Aorta (tissue), 5 donors: ENCODE measurements at regions of chr14 and their contacts with region 1.

Region 1: GRCh38 chr14:81170104-81170828 is 50.5 kb downstream of the GTF2A1 start:
- DNase-seq: peak; percentile 97
- ATAC-seq: peak; percentile 99
- H3K4me3 ChIP-seq: peak overlapping the region; percentile 24 to 82
- H3K27ac ChIP-seq: peak overlapping the region in 1 of 2 donors; percentile 87
- H3K4me1 ChIP-seq: no peaks in the 10 kb centered on the region
- H3K27me3 ChIP-seq: no peaks in the 10 kb centered on the region

Region 2: DNA sequence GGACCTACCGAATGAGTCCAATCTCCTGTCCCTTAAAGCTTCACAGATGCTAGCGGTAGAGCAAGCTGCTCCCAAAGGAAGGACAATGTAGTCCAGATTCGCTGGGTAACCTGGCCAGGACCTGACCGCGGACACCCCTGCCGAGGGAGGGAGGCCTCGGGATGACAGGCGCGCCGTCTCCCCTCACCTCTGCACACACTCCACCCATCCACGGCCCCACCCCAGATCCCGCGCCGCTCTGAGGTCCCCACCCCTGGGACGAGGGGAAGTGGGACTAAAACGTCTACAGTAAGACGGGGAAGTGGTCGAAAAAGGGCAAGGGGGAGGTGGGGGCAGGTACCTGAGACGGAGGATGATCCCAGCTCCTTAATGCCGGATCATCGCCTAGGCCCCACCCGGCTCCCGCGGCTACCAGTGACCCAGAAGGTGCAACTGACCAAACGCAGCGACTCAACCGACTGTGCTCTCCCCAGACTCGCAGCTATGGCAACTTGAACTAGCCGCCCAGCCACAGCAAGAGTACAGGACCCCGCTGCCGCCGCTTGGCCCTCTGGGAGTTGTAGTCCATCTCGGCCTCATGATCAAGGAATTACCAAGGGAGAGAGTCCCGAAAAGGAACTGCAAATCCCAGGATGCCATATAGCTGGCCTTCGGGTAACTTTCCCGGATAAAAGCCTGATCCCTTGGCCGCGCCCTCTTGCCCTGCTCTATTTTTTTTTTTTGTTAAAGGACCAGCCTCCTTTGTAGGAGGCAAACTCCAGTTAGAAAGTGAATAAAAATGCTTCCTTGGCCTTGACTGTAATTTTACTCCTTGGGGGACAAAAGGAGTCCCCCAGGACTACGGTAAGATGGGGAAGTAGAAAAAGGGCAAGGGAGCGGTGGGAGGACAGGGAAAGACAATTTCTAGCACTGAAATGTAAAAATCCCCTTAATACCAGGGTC is 228.8 kb before region 1 on chr14 and contains the start of gene CEP128:
- intact Hi-C with region 1: loop called in 1 of 2 experiments (anchors 5 kb)
- DNase-seq: peak; percentile 97 to 98
- ATAC-seq: peak; percentile 100
- H3K4me3 ChIP-seq: peak within 1 kb of the TSS; percentile 19 to 70
- H3K27ac ChIP-seq: peak within 1 kb of the TSS in 1 of 2 donors; percentile 7
- H3K4me1 ChIP-seq: no peaks in the 10 kb centered on the region
- H3K27me3 ChIP-seq: peaks cover 0 to 1% of the 10 kb centered on the region in 2 donors
- total RNA-seq, gene CEP128: 6.0 to 8.4 TPM

Region 3: DNA sequence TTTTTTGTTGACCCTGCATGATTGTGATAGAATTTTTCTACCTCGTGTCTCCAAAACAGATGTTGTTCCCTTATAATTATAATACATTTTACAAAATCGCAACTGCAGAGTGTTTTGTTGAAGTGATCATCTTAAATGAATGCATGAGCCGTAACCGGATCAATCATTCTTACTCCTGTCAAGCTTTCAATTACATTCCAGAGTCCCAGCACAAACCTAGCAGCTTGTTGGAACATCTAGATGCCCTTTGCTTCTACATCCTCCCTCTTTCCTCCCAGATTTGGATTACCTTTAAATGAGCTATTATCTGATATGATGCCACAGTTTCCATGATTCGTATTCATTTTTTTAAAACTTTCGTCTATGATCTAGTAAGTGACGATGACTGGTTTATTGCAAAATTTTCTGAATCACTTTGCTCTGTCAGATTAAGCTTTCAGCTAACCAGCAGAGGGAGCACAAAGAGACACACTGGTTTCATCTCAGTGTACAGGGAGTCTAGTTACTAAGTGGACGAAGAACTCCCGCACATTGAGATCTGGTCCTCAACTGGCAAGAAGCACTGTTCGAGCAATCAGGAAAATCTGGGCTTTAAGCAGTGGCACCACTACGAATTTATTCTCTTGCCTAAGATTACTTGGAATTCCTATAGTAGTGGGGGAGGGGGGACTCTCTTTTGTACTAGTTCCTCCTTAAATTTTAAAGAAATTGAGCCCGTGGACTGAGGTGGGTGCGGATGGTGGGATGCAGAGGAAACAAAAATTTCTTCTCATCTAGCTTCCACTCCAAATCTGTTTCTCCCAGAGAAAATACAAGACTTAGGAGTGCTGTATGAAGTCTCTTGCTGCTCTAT is 174.0 kb before region 1 on chr14:
- intact Hi-C with region 1: loop called (anchors 5 kb)
- DNase-seq: no peak
- ATAC-seq: peak; percentile 87
- H3K4me3 ChIP-seq: no peak overlapping the region
- H3K27ac ChIP-seq: no peak overlapping the region
- H3K4me1 ChIP-seq: no peaks in the 10 kb centered on the region
- H3K27me3 ChIP-seq: no peaks in the 10 kb centered on the region

Region 4: DNA sequence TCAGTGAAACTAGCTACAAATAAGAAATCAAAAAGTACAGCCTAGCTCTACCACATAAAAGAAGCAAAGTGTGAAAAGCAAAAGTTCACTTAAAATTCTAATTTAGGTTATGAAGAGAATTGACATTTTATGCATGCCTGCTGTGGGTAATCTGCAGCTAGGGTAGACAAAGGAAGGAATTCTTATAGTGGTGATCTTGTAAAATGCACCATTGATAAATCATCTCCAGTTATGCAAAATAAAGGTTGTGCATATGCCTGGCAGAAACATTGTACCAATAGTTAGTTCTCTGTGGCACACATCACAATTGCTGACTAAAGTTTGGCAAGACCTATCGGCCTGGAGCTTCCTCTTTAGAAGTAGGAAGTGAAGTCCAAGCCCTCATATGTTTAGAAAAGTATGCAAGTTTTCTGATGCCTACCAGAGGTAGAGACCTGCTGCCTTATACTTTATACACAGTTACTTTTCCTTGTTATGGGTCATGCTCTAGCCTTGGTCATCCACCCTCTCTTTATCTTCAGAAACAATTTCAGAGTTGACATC is 136.5 kb before region 1 on chr14:
- intact Hi-C with region 1: no loop called
- DNase-seq: no peak
- ATAC-seq: no peak
- H3K4me3 ChIP-seq: no peak overlapping the region
- H3K27ac ChIP-seq: no peak overlapping the region
- H3K4me1 ChIP-seq: no peaks in the 10 kb centered on the region
- H3K27me3 ChIP-seq: peaks cover 0 to 2% of the 10 kb centered on the region in 2 donors

Region 5: GRCh38 chr14:81122326-81122725 is 47.9 kb before region 1 on chr14:
- intact Hi-C with region 1: no loop called
- DNase-seq: no peak
- ATAC-seq: no peak
- H3K4me3 ChIP-seq: no peak overlapping the region
- H3K27ac ChIP-seq: no peak overlapping the region
- H3K4me1 ChIP-seq: no peaks in the 10 kb centered on the region
- H3K27me3 ChIP-seq: no peaks in the 10 kb centered on the region

Region 6: GRCh38 chr14:81219210-81219758 is 49.0 kb after region 1 on chr14:
- intact Hi-C with region 1: loop called in 1 of 2 experiments (anchors 5 kb)
- DNase-seq: peak; percentile 93 to 94
- ATAC-seq: peak; percentile 91
- H3K4me3 ChIP-seq: peak overlapping the region; percentile 75 to 99
- H3K27ac ChIP-seq: peak overlapping the region; percentile 30 to 98
- H3K4me1 ChIP-seq: peaks cover 3 to 5% of the 10 kb centered on the region in 2 donors
- H3K27me3 ChIP-seq: peaks cover 0 to 1% of the 10 kb centered on the region in 2 donors